ENCODE measurements at regions of chr10 and their contacts with region 1.

Region 1: GRCh38 chr10:114876602-114877300 is 55.2 kb downstream of the FHIP2A start:
- DNase-seq: peak; percentile 73 to 85 (median 77)
- H3K4me3 ChIP-seq: no peak overlapping the region
- H3K27ac ChIP-seq: no peak overlapping the region
- H3K4me1 ChIP-seq: peaks cover 9% of the 10 kb centered on the region
- H3K27me3 ChIP-seq: no peaks in the 10 kb centered on the region
- CTCF ChIP-seq: peak; percentile 51 to 72 (median 64)
- EP300 ChIP-seq: no peak
- POLR2A ChIP-seq: no peak

Region 2: GRCh38 chr10:115129752-115130151 is 253.0 kb after region 1 on chr10:
- intact Hi-C with region 1: loop called in 2 of 4 experiments (anchors 5 to 10 kb)
- DNase-seq: no peak
- H3K4me3 ChIP-seq: no peak overlapping the region
- H3K27ac ChIP-seq: no peak overlapping the region
- H3K4me1 ChIP-seq: no peaks in the 10 kb centered on the region
- H3K27me3 ChIP-seq: no peaks in the 10 kb centered on the region
- CTCF ChIP-seq: peak; percentile 17 to 36 (median 24)
- EP300 ChIP-seq: no peak
- POLR2A ChIP-seq: no peak

Measured in ovary (tissue), 10 donors.